Psoas muscle (tissue), 8 donors: ENCODE measurements at regions of chr11 and their contacts with region 1.

Region 1: DNA sequence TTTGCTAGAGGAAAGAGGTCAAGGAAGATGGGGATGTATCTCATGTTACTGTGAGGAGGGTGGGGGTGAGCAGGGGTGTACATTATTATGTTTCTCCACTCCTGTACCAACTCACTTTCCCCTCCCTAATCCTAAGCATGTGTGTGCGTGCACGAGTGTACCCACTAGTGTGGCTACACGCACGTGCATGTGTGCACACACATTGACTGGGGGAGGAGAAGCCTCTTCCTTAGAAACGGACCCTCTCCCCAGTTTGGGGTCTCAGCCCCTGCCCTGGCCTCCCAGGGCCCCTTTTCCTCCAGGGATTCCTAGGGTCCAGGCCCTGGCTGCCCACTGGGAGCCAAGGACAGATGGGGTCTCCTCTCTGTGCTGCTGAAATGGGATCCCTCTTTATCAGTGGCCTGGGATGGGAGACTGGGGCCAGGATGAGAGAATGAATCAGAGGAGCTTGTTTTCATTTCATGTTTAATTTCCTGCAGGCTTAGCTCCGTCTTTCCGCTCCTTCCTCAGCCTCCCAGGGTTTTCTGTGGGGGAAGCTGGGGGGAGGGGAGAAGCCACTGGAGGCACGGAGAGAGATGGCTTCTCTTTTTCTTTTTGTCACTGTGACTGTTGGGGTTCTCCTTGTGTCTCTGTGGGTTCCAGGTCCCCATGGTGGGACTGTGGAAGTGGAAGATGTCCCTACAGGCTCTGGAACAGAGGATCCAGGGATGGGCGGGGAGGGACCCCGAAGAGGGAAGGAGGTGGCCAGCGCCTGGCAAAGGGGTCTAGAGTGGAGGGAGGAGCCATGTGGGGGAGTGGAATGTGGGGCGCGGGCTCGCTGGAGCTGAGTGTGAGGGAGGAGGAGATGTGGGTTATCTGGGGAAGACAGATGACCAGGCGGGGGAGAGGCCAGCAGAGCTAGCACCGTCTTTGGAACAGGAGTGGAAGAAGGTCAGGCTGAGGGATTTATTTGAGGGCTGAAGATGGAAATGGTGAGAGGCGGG is 40.3 kb downstream of the ALX4 start:
- DNase-seq: no peak
- ATAC-seq: no peak
- H3K4me3 ChIP-seq: no peak overlapping the region
- H3K27ac ChIP-seq: no peak overlapping the region
- H3K4me1 ChIP-seq: no peaks in the 10 kb centered on the region
- H3K27me3 ChIP-seq: no peaks in the 10 kb centered on the region
- CTCF ChIP-seq: no peak

Region 2: DNA sequence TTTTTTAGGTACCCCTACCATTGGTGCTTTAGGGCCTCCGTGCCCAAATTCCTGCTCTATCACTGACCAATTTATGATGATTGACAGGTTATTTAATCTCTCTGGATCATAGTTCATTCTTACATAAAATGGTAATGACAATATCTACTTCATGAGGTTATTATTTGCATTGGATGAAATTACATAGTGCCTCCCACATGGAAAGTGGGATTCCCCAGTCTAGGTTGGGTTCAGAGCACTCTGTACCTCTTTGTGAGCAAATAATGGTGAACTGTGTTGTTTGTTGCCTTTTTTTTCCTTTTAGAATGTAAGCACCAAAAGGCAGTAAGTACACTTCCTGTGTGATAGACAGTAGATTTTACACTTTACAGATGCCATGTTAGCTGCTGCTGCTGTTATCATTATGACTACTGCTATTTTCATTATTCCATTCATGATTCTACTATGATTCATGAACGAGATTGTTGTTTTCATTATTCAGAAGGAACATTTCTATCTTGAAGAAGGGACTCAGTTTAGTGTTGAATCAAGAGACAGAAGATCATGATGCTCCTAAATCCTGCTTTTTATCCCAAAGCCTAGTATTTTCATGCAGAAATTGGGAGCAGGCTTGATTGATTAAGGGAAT is 60.6 kb before region 1 on chr11:
- intact Hi-C with region 1: loop called in 1 of 2 experiments (anchors 10 kb)
- DNase-seq: no peak
- ATAC-seq: no peak
- H3K4me3 ChIP-seq: no peak overlapping the region
- H3K27ac ChIP-seq: no peak overlapping the region
- H3K4me1 ChIP-seq: peaks cover 14% of the 10 kb centered on the region
- H3K27me3 ChIP-seq: no peaks in the 10 kb centered on the region
- CTCF ChIP-seq: no peak

Region 3: DNA sequence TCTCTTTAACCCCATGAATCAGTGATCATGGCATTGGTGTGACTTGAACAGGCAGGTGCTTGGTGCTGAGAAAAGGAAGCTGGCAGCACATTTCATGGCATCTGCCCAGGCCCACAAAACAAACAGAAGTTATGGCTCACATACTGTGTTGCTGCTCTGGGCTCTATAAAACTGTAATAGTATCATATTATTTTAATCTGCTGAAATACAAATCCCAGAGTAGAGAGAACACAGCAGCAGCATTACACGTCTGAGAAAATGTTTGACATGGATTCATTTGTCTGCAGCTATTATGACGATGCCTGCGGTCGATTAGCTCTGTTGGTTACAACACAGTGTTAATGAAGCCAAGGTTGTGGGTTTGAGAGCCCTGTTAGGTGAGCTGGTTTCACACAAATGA is 40.6 kb before region 1 on chr11:
- intact Hi-C with region 1: no loop called
- DNase-seq: peak in 1 of 2 donors; percentile 52
- ATAC-seq: peak; percentile 28 to 88 (median 78)
- H3K4me3 ChIP-seq: no peak overlapping the region
- H3K27ac ChIP-seq: no peak overlapping the region
- H3K4me1 ChIP-seq: no peaks in the 10 kb centered on the region
- H3K27me3 ChIP-seq: no peaks in the 10 kb centered on the region
- CTCF ChIP-seq: no peak

Region 4: DNA sequence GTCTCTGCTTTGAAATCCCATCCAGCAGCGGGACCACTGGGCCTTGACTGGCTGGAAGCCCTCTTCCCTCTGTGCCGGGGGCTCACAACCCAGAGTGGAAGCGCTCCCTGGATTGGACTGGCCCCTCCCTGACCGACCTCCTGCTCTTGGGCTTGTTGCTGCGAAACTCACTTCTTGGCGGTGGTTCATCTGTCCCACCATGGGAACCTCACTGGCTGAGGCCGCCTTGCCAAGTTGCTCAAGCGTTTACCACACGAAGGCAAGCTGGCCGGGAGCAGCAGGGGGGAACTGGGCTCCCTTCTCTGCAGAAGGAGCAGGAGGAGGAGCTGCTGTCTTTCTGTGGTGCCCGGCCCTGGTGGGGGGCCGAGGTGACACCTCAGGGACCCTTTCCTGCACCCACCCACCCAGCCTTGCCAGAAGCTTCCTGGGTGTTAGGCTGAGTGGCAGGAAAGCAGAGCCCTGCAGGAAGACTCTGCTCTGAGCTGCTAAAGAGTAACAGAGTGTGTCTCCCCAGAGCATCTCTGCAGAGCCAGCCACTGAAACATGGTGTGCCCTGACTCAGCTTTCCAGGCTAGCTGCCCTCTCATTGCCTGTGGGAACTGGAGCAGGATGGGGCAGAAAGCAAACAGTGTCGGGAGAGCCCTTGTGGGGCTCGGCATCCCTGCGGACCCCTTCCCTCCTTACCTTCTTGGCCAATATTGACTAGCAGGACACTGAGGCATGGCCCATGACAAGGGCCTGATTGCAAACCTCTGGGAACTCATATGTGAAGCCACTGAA is 128.8 kb after region 1 on chr11:
- intact Hi-C with region 1: no loop called
- DNase-seq: no peak
- ATAC-seq: no peak
- H3K4me3 ChIP-seq: no peak overlapping the region
- H3K27ac ChIP-seq: no peak overlapping the region
- H3K4me1 ChIP-seq: no peaks in the 10 kb centered on the region
- H3K27me3 ChIP-seq: peaks cover 0 to 14% (median 0%) of the 10 kb centered on the region in 3 donors
- CTCF ChIP-seq: no peak